ENCODE measurements at regions of chr16 and their contacts with region 1.

Region 1: DNA sequence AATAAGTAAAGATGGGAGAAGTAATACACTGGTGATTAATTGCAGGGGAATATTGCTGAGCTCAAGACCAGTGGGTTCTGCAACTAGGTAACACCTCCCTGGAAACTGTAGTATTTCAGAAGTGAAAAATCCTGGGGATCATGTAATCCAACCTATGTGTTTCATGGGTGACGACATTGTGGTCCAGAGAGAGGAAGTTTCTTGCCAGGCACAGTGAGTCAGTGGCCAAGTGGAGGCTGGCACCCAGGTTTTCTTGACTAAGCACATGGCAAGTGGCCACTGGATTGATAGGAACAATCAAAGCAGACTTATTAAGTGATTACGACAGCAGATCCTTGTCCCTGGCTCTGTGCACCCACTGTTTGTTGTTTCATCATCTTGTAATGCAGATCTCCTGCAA is 14.6 kb upstream of the CIITA start:
- DNase-seq: no peak
- ATAC-seq: peak; percentile 28
- H3K4me3 ChIP-seq: no peak overlapping the region
- H3K27ac ChIP-seq: no peak overlapping the region
- H3K4me1 ChIP-seq: peaks cover 17% of the 10 kb centered on the region
- H3K27me3 ChIP-seq: no peaks in the 10 kb centered on the region
- CTCF ChIP-seq: no peak
- EP300 ChIP-seq: no peak
- POLR2A ChIP-seq: no peak
- RAD21 ChIP-seq: no peak

Region 2: DNA sequence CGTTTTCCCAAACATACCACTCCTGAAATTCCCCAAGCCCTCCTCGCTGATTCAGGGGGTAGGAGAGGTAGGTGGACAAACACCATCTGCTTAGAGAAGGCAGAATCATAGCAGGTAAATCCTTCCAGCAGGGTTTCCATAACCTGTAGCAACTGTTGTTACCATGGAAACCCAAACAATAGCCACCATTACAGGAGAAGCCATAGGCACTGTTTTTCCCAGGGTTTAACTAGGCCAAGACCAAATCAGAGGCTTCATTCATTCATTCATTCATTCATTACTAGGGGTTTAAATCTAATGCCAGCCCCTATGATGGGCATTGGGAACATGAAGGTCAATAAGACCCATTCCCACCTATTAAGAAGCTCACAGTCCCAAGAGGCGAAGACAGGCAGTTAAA is 10.9 kb before region 1 on chr16:
- CTCF ChIA-PET with region 1: interaction called, 11 read pairs
- POLR2A ChIA-PET with region 1: interaction called, 4 read pairs
- RAD21 ChIA-PET with region 1: interaction called, 6 read pairs
- SMC1A ChIA-PET with region 1: interaction called, 12 read pairs
- in situ Hi-C with region 1: no loop called
- intact Hi-C with region 1: no loop called
- DNase-seq: no peak
- ATAC-seq: no peak
- H3K4me3 ChIP-seq: no peak overlapping the region
- H3K27ac ChIP-seq: no peak overlapping the region
- H3K4me1 ChIP-seq: peaks cover 14% of the 10 kb centered on the region; the same call in 1 of the 2 replicates
- H3K27me3 ChIP-seq: no peaks in the 10 kb centered on the region
- CTCF ChIP-seq: no peak
- EP300 ChIP-seq: no peak
- POLR2A ChIP-seq: no peak
- RAD21 ChIP-seq: no peak